ENCODE measurements at regions of chr7 and their contacts with region 1.

Region 1: DNA sequence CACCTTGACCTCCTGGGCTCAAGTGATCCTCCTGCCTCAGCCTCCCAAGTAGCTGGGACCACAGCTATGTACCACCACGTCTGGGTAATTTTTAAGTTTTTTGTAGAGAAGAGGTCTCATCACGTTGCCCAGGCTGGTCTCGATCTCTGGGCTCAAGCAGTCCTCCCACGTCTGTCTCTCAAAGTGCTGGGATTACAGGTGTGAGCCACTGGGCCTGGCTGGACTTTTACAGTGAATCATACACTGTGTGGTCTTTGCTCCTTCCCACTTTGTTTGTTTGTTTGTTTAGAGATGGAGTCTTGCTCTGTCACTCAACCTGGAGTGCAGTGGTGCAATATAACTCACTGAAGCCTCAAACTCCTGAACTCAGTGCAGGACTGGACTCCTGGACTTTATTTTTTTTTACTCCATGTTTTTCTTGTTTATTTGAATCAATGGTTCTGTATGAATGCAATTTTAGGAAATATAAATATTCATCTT is 12.5 kb downstream of the PPIA start:
- DNase-seq: no peak
- ATAC-seq: no peak
- H3K4me3 Mint-ChIP-seq: no peak overlapping the region
- H3K27ac Mint-ChIP-seq: no peak overlapping the region
- H3K4me1 Mint-ChIP-seq: no peaks in the 10 kb centered on the region
- H3K27me3 Mint-ChIP-seq: no peaks in the 10 kb centered on the region
- CTCF ChIP-seq: no peak

Region 2: GRCh38 chr7:44587843-44588711 is 220.9 kb before region 1 on chr7:
- CTCF ChIA-PET with region 1: no interaction called
- POLR2A ChIA-PET with region 1: interaction called, 14 read pairs
- intact Hi-C with region 1: no loop called
- DNase-seq: no peak
- ATAC-seq: peak; percentile 79
- H3K4me3 Mint-ChIP-seq: no peak overlapping the region
- H3K27ac Mint-ChIP-seq: no peak overlapping the region
- H3K4me1 Mint-ChIP-seq: peaks cover 6% of the 10 kb centered on the region
- H3K27me3 Mint-ChIP-seq: peaks cover 3% of the 10 kb centered on the region
- CTCF ChIP-seq: no peak

Measured in activated B cell treated with CpG ODN at 0.5 μM for 24 hours (primary cell).